ENCODE measurements at regions of chr1 and their contacts with region 1.

Region 1: GRCh38 chr1:227428803-227429202 is 110.5 kb upstream of the CDC42BPA start:
- DNase-seq: peak; percentile 38 to 70 (median 56)
- ATAC-seq: peak; percentile 40 to 60 (median 48)
- H3K4me3 ChIP-seq: no peak overlapping the region
- H3K27ac ChIP-seq: peak overlapping the region in 11 of 12 donors; percentile 27 to 76 (median 62)
- H3K4me1 ChIP-seq: peaks cover 0 to 52% (median 28%) of the 10 kb centered on the region in 12 donors
- H3K27me3 ChIP-seq: no peaks in the 10 kb centered on the region
- CTCF ChIP-seq: no peak
- POLR2A ChIP-seq: no peak

Region 2: GRCh38 chr1:227351443-227351842 is 77.4 kb before region 1 on chr1:
- intact Hi-C with region 1: loop called in 3 of 10 experiments (anchors 5 to 10 kb)
- DNase-seq: peak in 2 of 5 donors; percentile 16 to 29
- ATAC-seq: peak; percentile 47 to 86 (median 74)
- H3K4me3 ChIP-seq: no peak overlapping the region
- H3K27ac ChIP-seq: peak overlapping the region in 6 of 12 donors; percentile 13 to 41 (median 31)
- H3K4me1 ChIP-seq: peaks cover 0 to 29% (median 16%) of the 10 kb centered on the region in 12 donors
- H3K27me3 ChIP-seq: no peaks in the 10 kb centered on the region
- CTCF ChIP-seq: no peak
- POLR2A ChIP-seq: no peak

Measured in heart left ventricle (tissue), 16 donors.